Gastrocnemius medialis (tissue), 4 donors: ENCODE measurements at regions of chr2 and their contacts with region 1.

Region 1: DNA sequence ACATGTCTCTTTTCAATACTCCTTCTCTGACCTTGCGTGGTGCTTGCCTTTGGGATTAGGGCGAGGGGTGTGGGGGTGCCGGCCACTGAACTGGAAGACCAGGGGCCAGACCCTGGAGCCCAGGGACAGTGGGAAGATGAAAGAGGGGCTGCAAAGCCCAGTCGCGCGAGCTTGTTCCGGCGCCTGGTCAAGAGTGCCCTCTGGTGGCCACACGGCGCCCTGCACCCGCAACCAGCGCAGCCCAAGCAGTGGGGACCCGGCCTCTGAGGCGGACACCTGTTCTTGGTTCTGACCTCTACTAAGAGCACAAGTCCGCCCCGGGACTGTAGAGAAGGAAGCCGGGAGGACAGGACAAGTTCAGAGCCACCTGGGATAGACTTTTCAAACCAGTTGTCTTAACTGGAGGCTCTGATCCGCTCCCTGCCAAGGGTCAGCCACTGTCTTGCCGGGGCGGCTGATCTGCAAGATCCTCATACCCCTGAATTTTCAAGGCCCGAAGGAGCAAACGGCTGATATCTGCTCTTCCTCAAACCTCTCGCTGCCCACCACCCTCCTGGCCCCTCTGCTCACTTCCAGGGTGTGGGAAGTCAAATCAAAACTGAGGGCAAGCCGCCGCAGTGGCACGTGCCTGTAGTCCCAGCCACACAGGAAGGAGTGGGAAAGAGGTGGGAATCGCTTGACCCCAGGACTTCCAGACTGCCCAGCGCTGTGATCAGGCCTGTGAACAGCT is 14.9 kb upstream of the MSH6 start:
- DNase-seq: peak; percentile 23 to 39
- ATAC-seq: peak; percentile 68 to 74
- H3K4me3 ChIP-seq: peak overlapping the region in 2 of 4 donors; percentile 16 to 28
- H3K27ac ChIP-seq: no peak overlapping the region
- H3K4me1 ChIP-seq: no peaks in the 10 kb centered on the region
- H3K27me3 ChIP-seq: no peaks in the 10 kb centered on the region
- CTCF ChIP-seq: peak; percentile 83 to 99 (median 95)
- POLR2A ChIP-seq: no peak

Region 2: DNA sequence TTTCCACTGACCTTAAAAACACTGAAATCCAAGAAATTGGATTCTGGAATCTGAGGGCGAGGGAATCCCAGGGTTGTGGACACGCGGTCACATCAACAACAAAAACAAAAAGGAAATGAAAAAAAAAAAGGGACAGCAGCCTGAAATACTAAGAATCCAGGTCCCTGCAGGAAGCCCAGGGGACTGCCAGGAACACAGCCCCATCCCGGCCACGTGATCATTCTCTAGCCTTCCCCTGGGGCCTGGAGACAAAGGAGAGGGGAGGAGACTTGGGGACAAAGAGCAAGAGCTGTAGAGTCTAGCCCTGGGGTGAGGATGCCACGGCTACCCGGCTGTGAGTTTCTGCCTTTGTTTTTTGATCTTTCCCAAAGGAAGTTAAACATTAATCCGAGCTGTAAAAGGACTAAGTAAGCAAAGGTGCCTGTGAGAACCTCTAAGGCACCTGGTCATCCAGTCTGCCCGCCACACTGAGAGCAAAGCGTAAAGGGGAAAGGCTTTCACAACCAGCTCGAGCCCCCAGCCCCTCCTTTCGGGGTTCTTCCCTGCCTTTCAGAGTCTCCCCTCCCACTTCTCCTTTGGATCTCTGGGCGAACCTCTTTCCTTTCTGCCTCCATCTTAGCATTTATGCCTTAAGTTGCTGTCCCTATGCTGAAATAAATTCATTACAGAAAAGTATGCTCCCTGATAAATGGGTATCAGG is 423.0 kb before region 1 on chr2:
- in situ Hi-C with region 1: loop called in 1 of 4 experiments (anchors 10 kb)
- intact Hi-C with region 1: no loop called
- DNase-seq: peak in 1 of 2 donors; percentile 7
- ATAC-seq: peak; percentile 68 to 82
- H3K4me3 ChIP-seq: peak overlapping the region; percentile 31 to 48 (median 44)
- H3K27ac ChIP-seq: peak overlapping the region; percentile 24 to 67 (median 59)
- H3K4me1 ChIP-seq: peaks cover 9 to 14% of the 10 kb centered on the region in 2 donors
- H3K27me3 ChIP-seq: no peaks in the 10 kb centered on the region
- CTCF ChIP-seq: no peak
- POLR2A ChIP-seq: no peak

Region 3: DNA sequence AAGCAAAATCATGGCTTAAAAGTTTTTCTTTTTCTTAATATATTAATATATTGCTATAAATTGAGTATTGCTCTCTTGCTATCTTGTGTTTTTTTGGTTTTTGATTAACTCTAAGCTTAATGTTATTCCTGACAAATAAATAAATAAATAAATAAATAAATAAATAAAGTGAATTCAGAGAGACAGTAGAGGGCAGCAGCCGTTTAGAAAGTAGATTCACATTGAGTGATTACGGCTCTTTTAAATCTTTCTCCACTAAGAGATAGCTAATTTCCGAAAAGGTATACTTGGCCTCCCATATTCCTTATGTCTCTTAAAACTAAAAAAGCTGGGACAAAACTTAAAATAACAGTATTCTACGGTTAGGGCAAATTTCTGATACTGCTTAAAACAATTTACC is 330.8 kb before region 1 on chr2:
- in situ Hi-C with region 1: loop called in 3 of 4 experiments (anchors 5 to 10 kb)
- intact Hi-C with region 1: loop called (anchors 2 kb)
- DNase-seq: no peak
- ATAC-seq: peak; percentile 56 to 75
- H3K4me3 ChIP-seq: no peak overlapping the region
- H3K27ac ChIP-seq: no peak overlapping the region
- H3K4me1 ChIP-seq: no peaks in the 10 kb centered on the region
- H3K27me3 ChIP-seq: no peaks in the 10 kb centered on the region
- CTCF ChIP-seq: peak in 2 of 5 experiments; percentile 29 to 58
- POLR2A ChIP-seq: no peak